MCF 10A (cell line): ENCODE measurements at regions of chr13 and their contacts with region 1.

Region 1: DNA sequence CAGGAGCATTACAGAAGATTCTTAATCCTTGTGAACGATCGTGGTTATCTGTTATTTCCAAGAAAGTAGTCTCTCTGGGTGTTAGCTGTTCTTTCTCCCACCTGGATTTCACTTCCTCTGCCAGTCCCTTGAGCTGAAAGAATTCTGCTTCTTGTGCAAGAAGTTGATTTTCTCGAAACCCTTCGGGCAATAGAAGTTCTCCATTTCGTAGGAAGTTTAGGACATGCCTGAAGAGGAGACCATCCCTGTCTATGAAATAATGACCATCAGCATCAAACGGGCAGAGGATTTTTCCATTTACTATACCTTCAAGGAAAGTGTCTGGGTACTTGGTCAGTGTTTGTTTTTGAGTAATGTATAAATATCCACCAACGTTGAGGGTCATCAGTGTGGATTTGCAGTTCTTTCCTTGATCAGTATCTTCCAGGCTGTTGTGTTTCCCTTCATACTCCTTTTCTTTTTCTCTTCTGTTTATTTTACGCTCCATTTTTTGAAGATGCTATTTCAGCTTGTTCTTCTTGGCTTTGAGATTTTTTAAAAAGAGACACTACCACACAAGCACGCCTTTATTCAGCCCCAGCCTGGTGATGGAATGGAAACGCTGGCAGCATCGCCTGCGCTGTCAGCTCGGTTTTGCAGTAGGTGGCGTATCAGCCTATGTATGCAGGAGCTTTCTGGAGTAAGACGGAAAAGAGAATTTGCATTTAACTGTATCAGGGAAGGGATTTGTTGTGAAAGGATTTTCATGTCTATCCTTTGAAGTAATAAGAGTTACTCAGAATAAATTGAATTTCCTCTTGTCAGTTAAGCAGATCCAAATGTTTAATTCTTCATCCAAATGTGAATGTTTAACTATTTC is 6.5 kb downstream of the KCTD4 start:
- DNase-seq: peak; percentile 78
- H3K4me3 Mint-ChIP-seq: peak overlapping the region; percentile 72
- H3K27ac Mint-ChIP-seq: peak overlapping the region; percentile 75
- H3K4me1 Mint-ChIP-seq: peaks cover 24% of the 10 kb centered on the region
- H3K27me3 Mint-ChIP-seq: no peaks in the 10 kb centered on the region
- CTCF ChIP-seq: peak; percentile 69

Region 2: GRCh38 chr13:45047394-45048310 is 146.7 kb before region 1 on chr13:
- CTCF ChIA-PET with region 1: interaction called, 30 read pairs
- POLR2A ChIA-PET with region 1: interaction called, 6 read pairs
- intact Hi-C with region 1: loop called (anchors 1 kb)
- DNase-seq: peak; percentile 86
- H3K4me3 Mint-ChIP-seq: peak overlapping the region; percentile 64
- H3K27ac Mint-ChIP-seq: no peak overlapping the region
- H3K4me1 Mint-ChIP-seq: peaks cover 10% of the 10 kb centered on the region
- H3K27me3 Mint-ChIP-seq: no peaks in the 10 kb centered on the region
- CTCF ChIP-seq: peak; percentile 92

Region 3: GRCh38 chr13:45133396-45134118 is 60.8 kb before region 1 on chr13:
- CTCF ChIA-PET with region 1: no interaction called
- POLR2A ChIA-PET with region 1: interaction called, 13 read pairs
- intact Hi-C with region 1: no loop called
- DNase-seq: no peak
- H3K4me3 Mint-ChIP-seq: no peak overlapping the region
- H3K27ac Mint-ChIP-seq: no peak overlapping the region
- H3K4me1 Mint-ChIP-seq: peaks cover 30% of the 10 kb centered on the region
- H3K27me3 Mint-ChIP-seq: no peaks in the 10 kb centered on the region
- CTCF ChIP-seq: no peak

Region 4: DNA sequence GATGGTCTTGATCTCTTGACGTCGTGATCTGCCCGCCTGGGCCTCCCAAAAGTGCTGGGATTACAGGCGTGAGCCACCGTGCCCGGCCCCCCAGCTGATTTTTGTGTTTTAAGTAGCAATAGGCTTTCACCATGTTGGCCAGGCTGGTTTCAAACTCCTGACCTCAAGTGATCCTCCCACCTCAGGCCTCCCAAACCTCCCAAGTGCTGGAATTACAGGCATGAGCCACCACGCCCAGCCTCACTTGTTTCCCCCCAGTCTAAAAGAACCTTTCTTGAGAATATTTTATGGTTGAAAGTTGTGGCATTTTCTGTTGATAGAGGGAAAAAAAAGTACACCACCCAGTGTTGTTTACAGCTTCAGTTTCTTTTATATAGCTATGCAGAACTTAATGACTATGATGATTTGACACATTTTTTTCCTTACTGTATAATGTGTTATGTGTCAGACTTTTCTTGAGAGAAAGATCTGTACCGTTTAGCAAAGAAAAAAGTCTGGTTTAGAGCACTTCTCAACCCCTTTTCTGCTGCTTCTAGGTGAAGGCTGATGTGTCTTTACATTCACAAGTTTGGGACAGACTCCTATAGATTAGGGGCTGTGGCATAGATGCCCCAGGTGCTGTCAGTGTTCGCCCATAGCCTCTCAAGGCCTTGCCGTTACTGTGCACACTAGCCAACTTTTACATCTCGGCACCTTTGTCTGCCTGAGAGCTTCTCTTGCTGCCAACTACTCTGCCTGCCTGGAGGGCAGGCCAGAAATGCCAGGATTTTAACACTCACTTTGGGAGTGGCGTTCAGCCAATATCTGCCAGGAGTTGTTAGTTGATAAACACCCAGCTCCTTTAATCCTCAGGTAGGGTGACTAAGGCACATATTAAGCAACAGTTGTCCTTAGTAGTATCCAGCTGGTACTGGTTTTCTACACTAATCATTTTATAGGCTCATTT is 26.4 kb before region 1 on chr13:
- CTCF ChIA-PET with region 1: interaction called, 14 read pairs
- POLR2A ChIA-PET with region 1: interaction called, 98 read pairs
- intact Hi-C with region 1: no loop called
- DNase-seq: peak; percentile 99
- H3K4me3 Mint-ChIP-seq: peak overlapping the region; percentile 46
- H3K27ac Mint-ChIP-seq: peak overlapping the region; percentile 90
- H3K4me1 Mint-ChIP-seq: peaks cover 16% of the 10 kb centered on the region
- H3K27me3 Mint-ChIP-seq: no peaks in the 10 kb centered on the region
- CTCF ChIP-seq: no peak

Region 5: DNA sequence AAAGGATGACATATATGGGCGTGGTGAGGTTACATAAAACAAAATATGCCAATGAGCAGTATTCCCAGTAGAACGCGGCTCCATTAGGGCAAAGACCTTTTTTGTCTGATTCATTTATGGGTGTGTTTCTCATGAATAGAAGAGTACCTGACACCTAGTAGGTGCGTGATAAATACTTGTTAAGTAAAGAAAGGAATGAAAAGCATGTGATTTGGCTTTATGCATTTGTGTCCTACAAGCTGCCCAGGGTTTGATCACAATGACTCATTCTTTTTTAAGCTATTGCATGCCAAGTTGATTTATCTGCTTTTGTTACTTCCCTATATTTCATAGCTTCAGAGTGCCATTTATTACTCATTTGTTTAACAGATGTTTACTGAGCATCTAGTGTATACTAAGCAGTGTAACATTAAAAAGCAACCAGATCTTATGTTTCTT is 25.6 kb after region 1 on chr13:
- CTCF ChIA-PET with region 1: interaction called, 8 read pairs
- POLR2A ChIA-PET with region 1: interaction called, 37 read pairs
- intact Hi-C with region 1: no loop called
- DNase-seq: peak; percentile 90
- H3K4me3 Mint-ChIP-seq: peak overlapping the region; percentile 28
- H3K27ac Mint-ChIP-seq: peak overlapping the region; percentile 81
- H3K4me1 Mint-ChIP-seq: peaks cover 48% of the 10 kb centered on the region
- H3K27me3 Mint-ChIP-seq: no peaks in the 10 kb centered on the region
- CTCF ChIP-seq: no peak

Region 6: DNA sequence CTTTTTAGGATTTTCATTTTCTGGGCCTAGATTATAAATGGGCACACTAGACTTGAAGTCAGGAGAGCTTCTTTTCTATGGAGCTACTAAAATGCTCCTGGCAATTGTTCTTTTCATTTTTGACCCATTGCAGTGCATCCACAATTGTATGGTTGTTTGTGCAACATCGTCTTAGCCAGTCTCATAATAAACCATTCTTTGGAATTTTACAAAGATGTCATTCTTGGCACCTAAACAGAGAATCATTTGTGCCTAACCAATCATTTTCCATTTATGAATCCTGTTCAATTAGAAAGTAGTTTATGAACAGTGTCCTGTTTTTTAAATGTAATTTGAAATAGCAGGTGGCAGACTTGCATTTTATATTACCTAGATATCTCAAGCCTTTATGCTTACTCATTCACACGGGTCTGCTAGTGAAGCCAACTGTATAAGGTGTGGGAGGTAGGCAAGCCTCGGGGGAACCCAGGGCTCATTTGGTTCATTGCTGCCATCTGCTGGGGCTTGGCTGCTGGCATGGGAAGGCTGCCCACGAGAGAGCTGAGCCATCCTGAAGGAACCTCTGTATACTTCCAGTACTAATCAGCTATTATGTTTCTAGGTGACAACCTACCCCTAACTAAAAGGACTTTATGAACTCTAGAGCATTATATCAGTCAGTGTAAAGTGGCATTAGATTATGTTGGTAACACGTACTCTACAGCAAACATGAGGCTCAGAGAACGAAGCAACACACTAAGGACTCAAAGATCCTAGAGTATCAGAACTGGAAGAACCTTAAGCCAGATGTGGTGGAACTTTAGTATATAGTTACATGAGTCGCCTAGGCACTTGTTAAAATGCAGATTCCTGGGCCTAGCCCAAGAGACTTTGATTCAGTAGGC is 86.7 kb after region 1 on chr13:
- CTCF ChIA-PET with region 1: interaction called, 65 read pairs
- POLR2A ChIA-PET with region 1: interaction called, 39 read pairs
- intact Hi-C with region 1: loop called (anchors 1 kb)
- DNase-seq: peak; percentile 92
- H3K4me3 Mint-ChIP-seq: no peak overlapping the region
- H3K27ac Mint-ChIP-seq: no peak overlapping the region
- H3K4me1 Mint-ChIP-seq: peaks cover 5% of the 10 kb centered on the region
- H3K27me3 Mint-ChIP-seq: no peaks in the 10 kb centered on the region
- CTCF ChIP-seq: peak; percentile 83

Region 7: GRCh38 chr13:45364876-45365557 is 170.7 kb after region 1 on chr13:
- CTCF ChIA-PET with region 1: no interaction called
- POLR2A ChIA-PET with region 1: no interaction called
- intact Hi-C with region 1: no loop called
- DNase-seq: no peak
- H3K4me3 Mint-ChIP-seq: no peak overlapping the region
- H3K27ac Mint-ChIP-seq: no peak overlapping the region
- H3K4me1 Mint-ChIP-seq: peaks cover 40% of the 10 kb centered on the region
- H3K27me3 Mint-ChIP-seq: no peaks in the 10 kb centered on the region
- CTCF ChIP-seq: no peak